Dorsolateral prefrontal cortex (tissue), 120 donors: ENCODE measurements at regions of chr6 and their contacts with region 1.

Region 1: GRCh38 chr6:19836799-19837510 is at the start of gene ID4:
- DNase-seq: peak; percentile 57 to 90 (median 85)
- H3K4me3 ChIP-seq: peak within 1 kb of the TSS; percentile 35 to 77 (median 63)
- H3K27ac ChIP-seq: peak within 1 kb of the TSS in 51 of 59 donors; percentile 11 to 88 (median 68)
- H3K27me3 ChIP-seq: peaks cover 0 to 66% (median 20%) of the 10 kb centered on the region in 45 donors
- CTCF ChIP-seq: no peak
- total RNA-seq, gene ID4: 11.2 to 125 (median 47.8) TPM

Region 2: DNA sequence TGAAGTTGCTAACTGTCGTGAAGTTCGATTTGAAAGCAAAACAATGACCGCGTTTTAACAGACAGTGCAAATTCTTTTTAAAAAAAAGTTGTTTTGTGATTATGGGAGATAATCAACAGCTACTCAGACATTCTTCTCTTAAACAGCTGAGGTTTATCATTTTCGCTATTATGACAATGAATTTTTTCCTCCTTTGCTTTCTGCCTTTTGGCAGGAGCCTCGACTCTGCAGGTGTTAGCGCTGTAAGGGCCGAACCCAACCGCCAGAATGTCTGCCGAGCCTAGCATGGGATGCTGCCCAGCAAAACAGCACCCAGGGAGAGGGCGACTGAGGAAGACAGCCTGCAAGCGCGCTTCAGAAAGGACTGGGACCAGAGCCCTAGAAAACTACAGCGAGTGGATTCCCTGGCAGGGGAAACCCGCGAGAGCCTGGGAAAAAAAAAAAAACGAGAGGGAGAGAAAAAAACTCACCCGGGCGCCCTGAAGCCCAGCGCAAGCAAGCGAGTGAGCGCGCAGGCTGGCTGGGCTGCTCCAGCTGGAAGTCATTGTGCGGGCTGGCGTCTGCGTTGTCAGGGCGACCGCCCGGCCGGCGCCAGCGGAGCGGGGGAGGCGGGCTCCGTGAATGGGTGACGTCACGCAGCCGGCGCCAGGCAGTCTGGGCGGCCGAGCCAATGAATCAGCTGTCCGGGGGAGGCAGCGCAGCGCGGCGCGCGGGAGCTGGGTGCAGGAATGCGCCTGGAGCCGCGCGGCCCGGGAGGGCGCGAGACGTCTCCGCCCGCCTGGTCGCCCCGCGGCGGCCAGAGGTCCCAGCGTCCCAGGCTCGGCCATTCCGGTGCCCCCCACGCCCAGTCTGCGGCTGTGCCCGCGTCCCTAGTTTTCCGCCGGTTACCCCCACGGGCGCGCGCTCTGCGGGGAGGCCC is 32.5 kb before region 1 on chr6:
- intact Hi-C with region 1: loop called (anchors 2 to 5 kb)
- DNase-seq: peak; percentile 76 to 97 (median 94)
- H3K4me3 ChIP-seq: peak overlapping the region; percentile 51 to 81 (median 68)
- H3K27ac ChIP-seq: peak overlapping the region in 58 of 59 donors; percentile 6 to 96 (median 85)
- H3K27me3 ChIP-seq: no peaks in the 10 kb centered on the region
- CTCF ChIP-seq: peak in 34 of 56 donors; percentile 1 to 57 (median 26)

Region 3: GRCh38 chr6:19911223-19911622 is 74.3 kb after region 1 on chr6:
- intact Hi-C with region 1: no loop called
- DNase-seq: no peak
- H3K4me3 ChIP-seq: no peak overlapping the region
- H3K27ac ChIP-seq: no peak overlapping the region
- H3K27me3 ChIP-seq: peaks cover 0 to 5% (median 0%) of the 10 kb centered on the region in 45 donors
- CTCF ChIP-seq: no peak